Activated CD8-positive, alpha-beta T cell treated with anti-CD3 and anti-CD28 coated beads, Interleukin-2, amount 10 ng/mL, durations not matched to agents 7 days and 5 days (primary cell): ENCODE measurements at regions of chr3 and their contacts with region 1.

Region 1: GRCh38 chr3:182713743-182714517 is 79.4 kb upstream of the ATP11B start:
- DNase-seq: no peak
- ATAC-seq: peak; percentile 58
- H3K4me3 Mint-ChIP-seq: no peak overlapping the region
- H3K27ac Mint-ChIP-seq: no peak overlapping the region
- H3K4me1 Mint-ChIP-seq: peaks cover 16% of the 10 kb centered on the region
- H3K27me3 Mint-ChIP-seq: peaks cover 2% of the 10 kb centered on the region

Region 2: DNA sequence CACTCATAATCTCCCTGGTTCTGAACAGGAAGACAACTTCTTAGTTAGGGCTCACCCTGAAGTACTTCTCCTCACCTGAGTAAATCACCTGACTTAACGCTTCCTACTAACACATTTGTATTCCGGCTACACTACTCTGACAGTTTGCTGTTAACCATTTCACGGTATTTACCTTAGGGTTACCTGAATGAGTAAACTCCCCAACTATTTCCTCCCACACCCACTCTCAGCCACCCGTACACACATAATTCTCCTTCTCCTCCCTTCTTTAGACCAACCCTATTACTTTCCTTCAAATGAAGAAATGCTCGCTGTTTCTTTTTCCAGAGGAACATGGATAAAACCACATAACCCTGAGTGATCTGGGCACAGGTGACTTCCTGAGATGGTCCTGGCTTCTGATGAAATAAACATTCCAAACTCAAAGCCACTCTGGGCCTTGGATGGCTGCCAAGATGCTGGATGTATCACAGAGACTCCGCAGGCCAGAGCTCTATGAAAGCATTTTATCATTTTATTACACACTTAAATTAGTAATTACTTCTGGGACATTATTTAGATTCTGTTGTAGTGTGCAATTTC is 104.3 kb before region 1 on chr3:
- CTCF ChIA-PET with region 1: no interaction called
- POLR2A ChIA-PET with region 1: no interaction called
- DNase-seq: no peak
- ATAC-seq: no peak
- H3K4me3 Mint-ChIP-seq: no peak overlapping the region
- H3K27ac Mint-ChIP-seq: no peak overlapping the region
- H3K4me1 Mint-ChIP-seq: no peaks in the 10 kb centered on the region
- H3K27me3 Mint-ChIP-seq: peaks cover 7% of the 10 kb centered on the region

Region 3: GRCh38 chr3:182698078-182698477 is 15.9 kb before region 1 on chr3:
- CTCF ChIA-PET with region 1: interaction called, 20 read pairs
- POLR2A ChIA-PET with region 1: no interaction called
- DNase-seq: no peak
- ATAC-seq: no peak
- H3K4me3 Mint-ChIP-seq: no peak overlapping the region
- H3K27ac Mint-ChIP-seq: no peak overlapping the region
- H3K4me1 Mint-ChIP-seq: no peaks in the 10 kb centered on the region
- H3K27me3 Mint-ChIP-seq: peaks cover 20% of the 10 kb centered on the region

Region 4: GRCh38 chr3:182792901-182793662 is 79.2 kb after region 1 on chr3 and contains the start of gene ATP11B:
- CTCF ChIA-PET with region 1: interaction called, 50 read pairs
- POLR2A ChIA-PET with region 1: interaction called, 5 read pairs
- DNase-seq: peak; percentile 84
- ATAC-seq: peak; percentile 78
- H3K4me3 Mint-ChIP-seq: peak within 1 kb of the TSS; percentile 95
- H3K27ac Mint-ChIP-seq: peak within 1 kb of the TSS; percentile 99
- H3K4me1 Mint-ChIP-seq: peaks cover 23% of the 10 kb centered on the region
- H3K27me3 Mint-ChIP-seq: no peaks in the 10 kb centered on the region
- total RNA-seq, gene ATP11B: 124 to 125 TPM

Region 5: DNA sequence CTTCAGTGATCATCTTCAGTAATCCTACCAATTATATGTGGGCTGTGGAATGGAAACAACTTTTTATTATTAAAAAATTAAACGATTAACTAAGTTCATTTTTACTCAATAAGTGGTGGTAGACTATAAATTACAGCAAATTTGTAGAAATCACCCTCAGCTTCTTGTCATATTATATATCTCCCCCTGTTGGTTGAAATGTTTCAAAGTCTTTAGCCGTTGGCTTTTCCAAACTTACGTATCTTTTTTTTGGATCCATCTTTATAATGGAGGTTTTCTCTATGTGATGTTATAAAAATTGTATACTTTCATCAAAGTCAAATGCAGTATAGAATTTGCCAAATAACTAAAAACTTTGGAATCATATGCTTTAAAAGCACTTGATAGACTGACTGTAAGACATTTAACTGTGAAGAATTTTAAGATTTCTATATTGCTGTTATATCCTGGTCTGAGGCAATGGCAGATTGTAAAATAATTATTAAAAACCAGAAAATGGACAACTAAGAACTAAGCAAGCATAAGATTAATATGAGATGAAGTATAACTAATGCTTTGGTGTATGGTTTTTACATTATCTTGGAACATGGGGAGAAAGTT is 124.0 kb after region 1 on chr3:
- CTCF ChIA-PET with region 1: interaction called, 35 read pairs
- POLR2A ChIA-PET with region 1: no interaction called
- DNase-seq: no peak
- ATAC-seq: no peak
- H3K4me3 Mint-ChIP-seq: no peak overlapping the region
- H3K27ac Mint-ChIP-seq: no peak overlapping the region
- H3K4me1 Mint-ChIP-seq: peaks cover 2% of the 10 kb centered on the region
- H3K27me3 Mint-ChIP-seq: no peaks in the 10 kb centered on the region

Region 6: GRCh38 chr3:182843478-182843877 is 129.5 kb after region 1 on chr3:
- CTCF ChIA-PET with region 1: interaction called, 10 read pairs
- POLR2A ChIA-PET with region 1: no interaction called
- DNase-seq: no peak
- ATAC-seq: no peak
- H3K4me3 Mint-ChIP-seq: no peak overlapping the region
- H3K27ac Mint-ChIP-seq: no peak overlapping the region
- H3K4me1 Mint-ChIP-seq: no peaks in the 10 kb centered on the region
- H3K27me3 Mint-ChIP-seq: no peaks in the 10 kb centered on the region